Astrocyte of the cerebellum (primary cell): ENCODE measurements at regions of chr19 and their contacts with region 1.

Region 1: DNA sequence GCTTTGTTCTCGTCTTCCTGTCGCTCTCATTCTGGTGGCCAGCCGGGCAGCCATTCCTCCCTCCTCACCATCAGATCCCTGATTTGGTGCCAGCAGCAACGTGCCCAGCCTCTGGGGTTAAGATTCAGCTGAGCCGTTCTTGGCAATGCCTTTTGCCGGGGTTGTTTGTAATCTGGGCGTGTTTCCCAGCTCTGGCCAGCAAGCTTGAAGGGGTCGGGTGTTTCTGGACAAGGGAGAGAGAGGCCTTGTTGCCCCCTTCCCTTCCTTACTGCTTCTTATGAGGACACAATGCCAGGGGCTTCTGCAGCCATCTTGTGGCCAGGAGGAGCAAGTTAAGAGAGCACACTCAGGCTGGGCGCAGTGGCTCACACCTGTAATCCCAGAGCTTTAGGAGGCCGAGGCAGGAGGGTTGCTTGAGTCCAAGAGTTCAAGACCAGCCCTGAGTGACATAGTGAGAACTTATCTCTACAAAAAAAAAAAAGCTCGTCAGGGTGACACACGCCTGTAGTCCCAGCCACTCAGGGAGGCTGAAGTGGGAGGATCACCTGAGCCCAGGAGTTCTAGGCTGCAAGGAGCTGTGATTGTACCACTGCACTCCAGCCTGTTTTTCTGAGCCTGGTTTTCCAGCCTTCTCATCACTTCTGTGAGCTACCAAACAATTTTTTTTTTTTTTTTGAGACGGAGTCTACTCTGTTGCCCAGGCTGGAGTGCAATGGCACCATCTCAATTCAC is 10.7 kb upstream of the CRTC1 start:
- DNase-seq: peak; percentile 29
- H3K4me3 ChIP-seq: no peak overlapping the region
- CTCF ChIP-seq: peak; percentile 54

Region 2: GRCh38 chr19:18596752-18597157 is 76.0 kb before region 1 on chr19:
- in situ Hi-C with region 1: loop called (anchors 5 kb)
- DNase-seq: no peak
- H3K4me3 ChIP-seq: no peak overlapping the region
- CTCF ChIP-seq: no peak

Region 3: GRCh38 chr19:18745012-18745735 is 72.4 kb after region 1 on chr19:
- in situ Hi-C with region 1: loop called (anchors 5 kb)
- DNase-seq: no peak
- H3K4me3 ChIP-seq: no peak overlapping the region
- CTCF ChIP-seq: no peak